Left cardiac atrium (tissue), 4 donors: ENCODE measurements at regions of chr12 and their contacts with region 1.

Region 1: DNA sequence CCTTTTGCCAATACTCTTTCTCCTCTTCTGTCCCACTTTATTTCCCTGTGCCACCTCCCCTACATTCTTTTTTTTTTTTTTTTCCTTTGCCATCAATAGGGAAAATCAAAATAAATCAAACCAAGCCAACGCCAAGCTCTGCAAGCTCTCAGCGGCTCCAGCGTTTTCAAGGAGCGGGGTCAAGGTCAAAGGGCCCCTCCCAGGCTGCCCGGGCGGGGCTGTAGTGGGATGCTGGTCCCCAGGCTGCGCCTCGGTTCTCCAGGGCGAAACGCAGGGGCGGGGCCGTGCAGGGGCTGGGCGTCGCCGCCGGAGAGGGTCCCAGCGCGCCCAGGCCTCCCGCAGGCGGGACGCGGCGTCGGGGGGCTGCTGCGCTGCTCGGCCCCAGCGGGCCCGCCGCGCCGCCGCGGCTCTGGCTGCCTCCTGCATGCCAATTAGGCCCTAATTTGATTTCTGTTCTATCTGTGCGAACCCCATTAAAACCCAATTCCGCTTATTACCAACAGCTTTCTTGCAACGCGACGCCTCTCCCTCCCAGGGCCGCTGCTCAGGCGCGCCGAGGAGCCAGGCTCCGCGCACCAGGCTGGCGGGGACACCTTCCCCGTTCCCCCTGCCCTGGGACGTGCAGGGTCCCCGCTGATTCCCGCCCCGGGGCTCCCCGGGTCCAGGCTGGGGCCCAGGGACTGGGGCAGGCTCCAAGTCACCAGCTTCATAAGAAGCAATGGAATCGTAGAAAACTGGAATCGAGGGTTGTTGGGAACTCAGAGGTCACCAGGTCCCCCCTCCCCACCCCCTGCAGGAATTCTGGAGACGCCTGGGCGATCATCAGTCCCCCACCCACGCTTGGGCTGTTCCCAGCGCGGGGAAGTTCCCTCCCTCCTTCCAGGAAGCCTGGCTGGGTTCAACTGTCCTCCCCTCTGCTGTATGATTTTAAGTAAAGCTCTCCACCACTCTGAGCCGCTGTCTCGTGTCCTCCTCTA is 50.7 kb upstream of the MAP1LC3B2 start:
- DNase-seq: peak; percentile 48
- ATAC-seq: peak; percentile 59 to 74

Region 2: DNA sequence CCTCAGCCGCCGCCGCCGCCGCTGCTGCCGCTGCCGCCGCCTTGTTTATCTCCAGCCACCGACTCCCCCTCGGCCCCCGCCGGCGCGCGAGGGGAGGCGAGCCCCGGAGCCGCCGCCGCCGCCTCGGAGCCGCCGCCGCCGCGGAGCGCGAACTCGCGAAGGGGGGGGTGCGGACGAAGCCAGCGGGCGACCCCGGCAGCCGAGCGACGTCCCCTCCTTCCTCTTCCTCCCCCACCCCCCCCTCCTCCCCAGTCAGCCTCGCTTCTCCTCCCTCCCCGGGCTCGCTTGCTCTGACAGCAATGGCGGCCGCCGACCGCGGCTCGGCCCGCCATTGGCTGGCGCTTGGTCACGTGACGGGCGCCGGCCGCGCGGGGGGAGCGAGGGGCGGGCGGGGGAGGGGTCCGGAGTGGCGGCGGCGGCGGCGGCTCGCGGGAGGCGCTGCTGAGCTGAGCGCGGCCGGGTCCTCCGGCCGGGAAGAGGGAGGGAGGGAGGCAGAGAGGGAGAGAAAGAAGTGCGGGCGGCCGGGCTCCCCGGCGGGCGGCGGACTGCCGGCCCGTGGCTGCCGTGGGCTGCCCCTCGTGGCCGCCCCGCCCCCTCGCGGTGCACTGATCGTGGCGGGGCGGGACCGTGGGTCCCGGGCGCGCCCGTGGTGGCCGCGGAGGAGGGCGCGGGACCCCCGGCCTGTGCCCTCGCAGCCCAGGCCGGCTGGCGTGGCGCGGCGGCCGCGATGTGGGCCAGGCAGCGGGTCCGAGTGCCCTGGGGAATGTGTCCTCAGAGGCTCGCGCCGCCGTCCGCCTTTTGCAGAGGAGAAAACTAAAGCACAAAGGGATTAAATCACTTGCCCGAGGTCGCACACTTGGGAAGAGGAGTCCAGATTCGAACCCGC is 230.8 kb before region 1 on chr12 and contains the start of gene MED13L:
- intact Hi-C with region 1: loop called in 1 of 2 experiments (anchors 10 kb)
- DNase-seq: peak; percentile 90
- ATAC-seq: peak; percentile 95
- total RNA-seq, gene MED13L: 66.0 to 68.3 TPM

Region 3: DNA sequence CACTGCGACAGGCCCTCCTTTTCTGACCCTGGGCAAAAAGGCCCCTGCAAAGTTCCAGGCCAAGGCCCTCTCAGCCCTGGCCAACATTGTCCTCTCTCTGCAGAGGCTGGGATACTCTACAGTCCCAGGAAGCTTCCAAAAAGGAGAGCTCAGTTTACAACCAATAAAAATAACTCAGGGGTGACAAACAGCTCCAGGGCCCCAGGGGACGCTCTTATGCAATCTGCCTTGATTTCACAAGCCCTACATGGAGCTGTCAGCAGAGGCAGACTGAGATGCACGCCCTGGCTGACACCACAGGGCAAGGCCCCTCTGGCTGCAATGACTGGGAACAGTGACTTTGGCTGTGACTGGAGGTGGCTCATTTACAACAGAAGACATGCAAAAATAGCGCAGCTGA is 101.9 kb before region 1 on chr12:
- intact Hi-C with region 1: no loop called
- DNase-seq: peak; percentile 90
- ATAC-seq: peak; percentile 94

Region 4: DNA sequence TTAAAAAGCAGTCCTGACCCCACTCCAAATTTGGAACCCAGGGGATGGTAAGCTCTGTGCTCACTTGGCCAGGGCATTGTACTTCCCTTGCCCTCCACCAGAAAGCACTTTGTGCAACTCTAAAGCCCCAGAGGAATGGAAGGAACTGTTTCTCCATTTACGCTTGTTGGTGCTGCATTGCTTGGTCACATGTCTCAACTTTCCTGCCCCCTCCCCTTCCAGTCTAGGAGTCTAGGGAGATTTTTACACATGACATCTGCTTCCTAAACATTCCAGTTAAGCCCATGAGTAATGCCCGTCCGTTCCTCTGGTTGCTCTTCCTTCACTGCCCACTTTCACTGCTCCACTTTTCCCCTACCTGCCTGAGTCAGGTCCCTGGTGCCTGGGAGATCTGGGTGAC is 41.9 kb before region 1 on chr12:
- intact Hi-C with region 1: no loop called
- DNase-seq: no peak
- ATAC-seq: peak in 1 of 2 donors; percentile 57

Region 5: GRCh38 chr12:116559162-116559935 is 50.9 kb after region 1 on chr12 and contains the start of gene MAP1LC3B2:
- intact Hi-C with region 1: no loop called
- DNase-seq: peak; percentile 51
- ATAC-seq: peak; percentile 73 to 88
- total RNA-seq, gene MAP1LC3B2: 1.3 to 2.1 TPM